Cardiac septum (tissue), 1 donor: ENCODE measurements at regions of chr5 and their contacts with region 1.

Region 1: GRCh38 chr5:150846654-150847333 is 473 bp downstream of the IRGM start:
- DNase-seq: no peak

Region 2: DNA sequence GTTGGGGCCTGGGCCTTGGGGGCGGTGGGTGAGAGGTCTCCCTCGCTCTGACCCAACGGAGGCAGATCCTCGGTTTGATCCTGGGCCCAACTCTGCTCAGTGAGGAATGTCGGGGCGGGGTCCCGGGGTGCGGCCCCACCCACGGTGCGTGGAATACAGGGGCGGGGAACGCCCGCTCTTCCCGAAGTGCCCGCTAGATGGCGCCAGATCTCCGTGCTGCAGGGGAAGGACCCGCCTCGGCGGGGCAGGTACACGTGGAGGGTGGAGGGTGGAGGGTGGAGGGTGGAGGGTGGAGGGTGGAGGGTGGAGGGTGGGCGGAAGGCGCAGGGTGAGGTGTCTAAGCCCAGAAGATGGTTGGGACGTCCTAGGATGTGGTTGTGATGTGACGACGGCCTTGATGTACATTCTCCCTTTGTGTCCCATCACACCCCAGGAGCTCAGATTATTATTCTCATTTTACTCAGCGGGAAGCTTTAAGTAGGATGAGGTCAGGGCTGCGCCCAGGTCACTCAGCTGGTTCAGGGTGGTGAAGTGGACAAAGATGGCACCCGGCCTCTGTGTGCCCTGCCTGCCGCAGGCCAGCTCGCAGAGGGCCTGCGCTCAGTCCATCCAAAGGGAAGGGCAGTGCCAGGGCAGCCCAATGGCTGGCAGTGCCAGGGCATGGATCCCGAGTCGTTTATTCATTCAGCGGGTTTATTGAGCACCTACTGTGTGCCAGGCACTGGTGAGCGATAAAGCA is 387.8 kb before region 1 on chr5:
- intact Hi-C with region 1: loop called (anchors 10 kb)
- DNase-seq: peak; percentile 92

Region 3: GRCh38 chr5:150560401-150561193 is 286.2 kb before region 1 on chr5:
- intact Hi-C with region 1: loop called (anchors 5 kb)
- DNase-seq: no peak

Region 4: GRCh38 chr5:150801117-150801927 is 45.5 kb before region 1 on chr5:
- intact Hi-C with region 1: loop called (anchors 5 kb)
- DNase-seq: no peak